Activated CD8-positive, alpha-beta T cell treated with anti-CD3 and anti-CD28 coated beads, Interleukin-2, amount 10 ng/mL, durations not matched to agents 7 days and 5 days (primary cell): ENCODE measurements at regions of chr17 and their contacts with region 1.

Region 1: DNA sequence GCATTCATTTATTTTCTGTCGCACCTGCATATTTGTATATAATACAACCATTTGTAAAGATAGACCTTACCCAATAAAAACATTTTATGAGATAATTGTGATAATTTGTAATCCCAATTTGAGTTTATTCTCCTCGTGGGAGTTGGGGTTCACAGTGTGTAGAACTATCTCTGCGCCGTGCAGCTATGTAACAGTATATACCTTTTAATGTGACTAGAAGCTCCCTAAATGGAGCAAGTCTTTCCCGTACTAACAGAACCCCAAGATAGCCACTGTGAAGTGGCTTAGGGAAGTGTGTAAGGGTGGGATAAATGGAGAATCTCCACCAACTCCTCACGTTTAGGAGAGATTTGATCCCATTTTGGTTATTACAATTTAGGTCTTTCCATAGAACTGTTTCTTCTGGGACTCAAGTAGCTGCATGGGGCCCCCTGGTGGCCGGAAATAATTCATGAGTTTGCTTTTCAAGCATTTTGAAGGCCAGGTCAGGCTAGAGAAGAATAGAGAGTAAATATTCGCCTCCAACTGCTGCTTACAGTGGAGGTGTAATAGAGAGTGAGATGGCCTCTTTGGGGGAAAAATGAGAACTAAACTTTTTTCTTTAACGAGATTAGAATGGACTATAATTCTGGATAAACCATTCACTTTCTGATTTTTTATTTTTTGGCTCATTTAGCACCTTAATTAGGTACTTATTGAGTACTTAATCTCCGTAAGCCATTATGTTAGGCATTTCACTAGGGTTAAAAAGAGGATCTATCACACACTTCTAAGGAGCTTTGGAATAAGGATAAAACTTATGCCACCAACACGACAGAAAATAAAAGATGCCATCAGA is 4.5 kb downstream of the TMEM100 start:
- DNase-seq: peak; percentile 72
- ATAC-seq: peak; percentile 49
- H3K4me3 Mint-ChIP-seq: no peak overlapping the region
- H3K27ac Mint-ChIP-seq: no peak overlapping the region
- H3K4me1 Mint-ChIP-seq: no peaks in the 10 kb centered on the region
- H3K27me3 Mint-ChIP-seq: peaks cover 17% of the 10 kb centered on the region

Region 2: GRCh38 chr17:55533608-55534007 is 184.5 kb before region 1 on chr17:
- CTCF ChIA-PET with region 1: interaction called, 11 read pairs
- POLR2A ChIA-PET with region 1: no interaction called
- DNase-seq: no peak
- ATAC-seq: no peak
- H3K4me3 Mint-ChIP-seq: no peak overlapping the region
- H3K27ac Mint-ChIP-seq: no peak overlapping the region
- H3K4me1 Mint-ChIP-seq: no peaks in the 10 kb centered on the region
- H3K27me3 Mint-ChIP-seq: peaks cover 6% of the 10 kb centered on the region

Region 3: DNA sequence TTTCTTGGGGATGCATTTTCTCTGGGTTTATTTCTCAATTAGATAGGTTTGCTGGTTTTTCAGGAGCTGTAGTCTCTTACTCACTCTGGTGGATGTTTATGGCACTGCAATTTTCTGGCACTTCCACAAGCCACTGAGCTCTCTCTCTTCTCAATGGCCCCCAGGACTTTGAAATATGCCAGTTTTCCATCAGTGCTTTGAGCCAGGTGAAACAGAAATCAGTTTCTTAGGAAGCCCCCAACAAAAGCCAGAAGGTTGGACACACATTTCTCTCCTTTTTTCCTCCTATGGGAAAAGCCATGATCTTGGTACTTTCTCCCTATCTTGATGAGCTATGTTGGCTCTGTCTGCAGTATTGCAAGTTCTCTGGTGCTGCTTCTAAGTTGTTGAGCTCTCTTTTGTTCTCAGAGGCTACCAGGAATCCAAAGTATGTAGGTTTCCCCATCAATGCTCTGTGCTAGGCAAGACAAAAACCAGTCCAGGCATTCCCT is 116.2 kb before region 1 on chr17:
- CTCF ChIA-PET with region 1: interaction called, 10 read pairs
- POLR2A ChIA-PET with region 1: no interaction called
- DNase-seq: peak; percentile 28
- ATAC-seq: peak; percentile 42
- H3K4me3 Mint-ChIP-seq: no peak overlapping the region
- H3K27ac Mint-ChIP-seq: no peak overlapping the region
- H3K4me1 Mint-ChIP-seq: no peaks in the 10 kb centered on the region
- H3K27me3 Mint-ChIP-seq: peaks cover 8% of the 10 kb centered on the region

Region 4: DNA sequence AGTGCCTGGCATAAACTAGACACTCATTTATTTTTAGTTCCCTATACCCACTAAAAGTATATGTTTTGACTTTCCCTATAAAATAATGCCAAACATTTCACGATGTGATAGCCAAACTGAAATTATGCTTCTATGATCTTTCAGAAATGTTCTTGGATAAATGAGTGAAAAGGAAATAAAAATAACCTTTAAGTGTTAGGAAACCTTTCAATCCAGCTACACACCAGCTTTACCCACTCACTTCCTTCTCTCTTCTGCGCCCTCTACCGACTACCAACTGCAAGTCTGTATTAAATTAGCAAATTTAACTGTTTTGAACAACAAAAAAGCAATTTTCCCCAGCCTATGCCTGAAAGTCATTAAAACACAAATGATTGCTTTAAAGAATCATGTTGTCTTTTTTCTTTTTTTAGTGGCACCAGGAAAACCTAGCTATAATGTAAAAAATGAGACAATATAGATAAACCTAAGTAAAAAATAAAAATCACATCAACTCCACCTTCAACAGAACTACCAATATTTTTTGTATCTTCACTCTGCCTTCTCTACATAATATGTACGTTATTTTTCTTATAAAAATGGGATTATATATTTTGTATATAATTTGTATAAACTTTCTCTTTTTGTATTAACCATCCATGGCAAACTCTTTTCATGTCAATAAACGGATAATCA is 17.8 kb after region 1 on chr17:
- CTCF ChIA-PET with region 1: interaction called, 38 read pairs
- POLR2A ChIA-PET with region 1: no interaction called
- DNase-seq: peak; percentile 61
- ATAC-seq: peak; percentile 49
- H3K4me3 Mint-ChIP-seq: no peak overlapping the region
- H3K27ac Mint-ChIP-seq: no peak overlapping the region
- H3K4me1 Mint-ChIP-seq: peaks cover 4% of the 10 kb centered on the region
- H3K27me3 Mint-ChIP-seq: peaks cover 13% of the 10 kb centered on the region

Region 5: GRCh38 chr17:55859301-55859795 is 141.2 kb after region 1 on chr17:
- CTCF ChIA-PET with region 1: no interaction called
- POLR2A ChIA-PET with region 1: no interaction called
- DNase-seq: no peak
- ATAC-seq: no peak
- H3K4me3 Mint-ChIP-seq: no peak overlapping the region
- H3K27ac Mint-ChIP-seq: no peak overlapping the region
- H3K4me1 Mint-ChIP-seq: no peaks in the 10 kb centered on the region
- H3K27me3 Mint-ChIP-seq: no peaks in the 10 kb centered on the region